ENCODE measurements at regions of chr1 and their contacts with region 1.

Region 1: DNA sequence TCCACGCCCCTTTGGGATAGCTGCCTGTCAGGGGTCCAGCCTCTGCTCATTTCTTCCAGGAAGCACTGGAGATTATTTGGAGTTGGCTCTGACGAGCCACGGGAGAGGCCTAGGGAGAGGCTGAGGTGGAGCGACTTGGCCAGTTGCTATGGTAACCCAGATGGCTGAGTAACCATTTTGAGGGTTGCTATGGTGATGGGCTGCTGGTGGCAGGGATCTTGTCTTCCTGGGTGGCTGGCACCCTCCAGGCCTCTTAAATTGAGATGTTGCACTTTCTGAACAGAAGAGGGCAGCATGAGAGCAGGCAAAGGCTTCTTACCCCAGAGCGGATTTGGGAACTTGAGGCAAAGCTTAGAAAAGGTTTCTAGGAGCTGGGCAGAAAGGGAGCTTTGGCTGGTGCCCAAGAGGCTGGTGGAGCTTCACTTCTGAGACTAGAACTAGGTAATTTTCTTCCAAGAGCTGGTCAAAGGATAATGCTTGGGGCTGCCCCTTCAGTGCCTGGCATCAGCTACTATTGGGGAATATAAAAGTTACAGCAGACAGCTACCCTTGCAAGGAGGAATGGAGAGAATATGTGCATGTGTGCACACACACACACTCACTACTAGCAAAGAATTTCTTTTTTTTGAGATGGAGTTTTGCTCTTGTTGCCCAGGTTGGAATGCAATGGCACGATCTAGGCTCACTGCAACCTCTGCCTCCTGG is 72.5 kb downstream of the NDUFS5 start:
- DNase-seq: peak; percentile 94
- H3K27ac ChIP-seq: no peak overlapping the region
- CTCF ChIP-seq: peak; percentile 80

Region 2: GRCh38 chr1:39061951-39062350 is 36.7 kb before region 1 on chr1:
- CTCF ChIA-PET with region 1: no interaction called
- POLR2A ChIA-PET with region 1: no interaction called
- DNase-seq: no peak
- H3K27ac ChIP-seq: no peak overlapping the region
- CTCF ChIP-seq: no peak

Region 3: DNA sequence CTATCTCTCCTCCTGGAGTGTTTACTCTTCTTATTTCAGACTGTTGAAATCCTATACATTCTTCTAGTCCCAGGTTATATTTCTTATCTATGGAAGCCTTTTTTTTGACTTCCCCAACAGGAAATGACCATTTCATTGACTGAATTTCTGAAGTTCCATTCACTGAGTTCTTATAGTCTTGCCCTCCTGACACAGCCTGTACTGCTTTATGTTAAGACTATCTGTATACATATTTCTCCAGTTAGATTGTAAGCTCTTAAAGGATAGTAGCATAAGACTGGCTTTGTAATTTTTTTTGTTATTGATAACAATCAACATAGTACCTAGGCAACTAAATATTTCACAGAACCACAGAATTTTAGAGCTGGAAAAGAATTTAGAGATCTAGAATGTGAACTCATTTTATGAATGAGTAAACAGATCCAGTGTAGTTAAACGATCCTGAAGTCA is 90.9 kb after region 1 on chr1:
- CTCF ChIA-PET with region 1: interaction called, 22 read pairs
- POLR2A ChIA-PET with region 1: no interaction called
- DNase-seq: no peak
- H3K27ac ChIP-seq: no peak overlapping the region
- CTCF ChIP-seq: no peak

Region 4: DNA sequence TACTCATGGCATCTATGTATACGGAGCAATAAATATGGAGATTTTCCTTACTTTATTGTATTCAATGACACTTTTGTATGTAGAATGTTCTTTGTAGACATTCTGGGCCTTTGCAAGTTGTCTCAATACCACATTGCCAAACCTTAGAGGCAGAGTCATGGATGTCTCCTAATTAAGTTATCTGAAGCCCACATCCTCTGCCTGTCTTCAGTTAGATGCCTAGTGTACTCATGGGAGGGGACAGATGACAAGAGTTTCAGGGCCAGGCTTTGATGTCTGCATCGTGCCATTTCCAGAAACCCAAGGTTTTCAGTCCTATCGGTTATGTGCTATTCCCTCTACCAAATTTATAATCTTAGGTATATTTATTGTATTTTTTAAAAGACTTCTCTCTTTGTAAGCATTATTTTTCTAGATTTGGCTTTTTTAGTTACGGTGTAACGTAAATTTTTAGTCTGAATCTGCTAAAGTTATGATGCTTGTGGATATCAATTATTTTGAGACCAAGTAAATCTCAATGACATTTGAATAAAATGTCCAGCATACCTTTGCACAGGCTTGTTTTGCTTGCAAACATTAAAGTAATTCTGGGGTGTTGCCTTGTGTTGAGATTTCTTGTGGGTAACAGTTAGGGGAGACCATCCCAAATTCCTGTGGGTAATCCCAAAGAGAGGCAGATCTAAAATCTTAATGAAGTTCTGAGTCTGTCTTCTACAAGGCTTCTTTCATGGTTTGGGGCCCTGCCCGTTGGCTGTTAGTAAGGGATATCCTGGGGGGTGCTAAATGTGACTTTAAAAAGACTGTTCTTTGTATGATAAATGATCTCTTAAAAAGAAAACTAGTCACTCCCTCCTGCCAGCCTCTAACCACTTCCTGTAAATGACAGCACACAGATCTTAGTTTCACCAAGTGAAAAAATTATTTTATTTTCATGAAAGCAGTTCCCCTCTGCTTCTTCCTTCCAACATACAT is 97.8 kb after region 1 on chr1:
- CTCF ChIA-PET with region 1: interaction called, 22 read pairs
- POLR2A ChIA-PET with region 1: no interaction called
- DNase-seq: no peak
- H3K27ac ChIP-seq: no peak overlapping the region
- CTCF ChIP-seq: no peak

Region 5: DNA sequence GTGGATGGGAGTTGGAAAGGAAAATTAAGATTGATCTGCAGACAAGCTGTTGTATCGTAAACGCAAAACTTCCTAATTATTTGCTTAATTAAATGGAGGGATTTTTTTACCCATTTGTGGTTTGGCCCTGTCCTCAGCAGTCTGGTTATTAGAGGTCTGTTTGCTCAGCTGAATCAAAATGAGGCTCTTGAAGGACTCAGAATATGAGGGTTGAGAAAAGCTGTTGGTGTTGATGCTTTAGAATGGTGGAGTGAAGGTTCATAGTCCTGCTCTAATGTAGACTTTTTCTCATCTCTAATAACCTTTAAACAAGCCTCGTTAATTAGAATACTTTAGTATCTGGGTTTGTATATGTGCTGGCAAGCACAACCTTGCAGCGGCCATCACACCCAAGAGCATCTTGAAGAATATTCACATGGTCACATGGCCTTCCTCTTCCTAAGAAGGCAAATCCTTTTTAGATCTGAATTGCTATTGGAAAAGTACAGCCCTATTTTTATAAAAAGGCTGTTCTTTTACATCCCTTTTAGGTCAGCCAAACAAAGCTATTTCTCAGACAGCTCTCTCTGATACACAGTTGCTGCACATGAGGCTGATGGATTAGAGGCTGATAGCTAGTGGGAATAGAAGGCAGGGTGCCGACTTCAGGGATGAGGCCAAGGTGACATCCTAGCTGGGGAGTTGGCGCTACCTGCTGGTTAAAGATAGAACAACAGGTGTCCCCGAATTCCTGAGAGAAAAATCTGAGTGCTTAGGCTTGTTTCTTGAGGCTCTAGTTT is 159.6 kb after region 1 on chr1:
- CTCF ChIA-PET with region 1: interaction called, 15 read pairs
- POLR2A ChIA-PET with region 1: no interaction called
- DNase-seq: peak; percentile 86
- H3K27ac ChIP-seq: no peak overlapping the region
- CTCF ChIP-seq: peak; percentile 89

Region 6: DNA sequence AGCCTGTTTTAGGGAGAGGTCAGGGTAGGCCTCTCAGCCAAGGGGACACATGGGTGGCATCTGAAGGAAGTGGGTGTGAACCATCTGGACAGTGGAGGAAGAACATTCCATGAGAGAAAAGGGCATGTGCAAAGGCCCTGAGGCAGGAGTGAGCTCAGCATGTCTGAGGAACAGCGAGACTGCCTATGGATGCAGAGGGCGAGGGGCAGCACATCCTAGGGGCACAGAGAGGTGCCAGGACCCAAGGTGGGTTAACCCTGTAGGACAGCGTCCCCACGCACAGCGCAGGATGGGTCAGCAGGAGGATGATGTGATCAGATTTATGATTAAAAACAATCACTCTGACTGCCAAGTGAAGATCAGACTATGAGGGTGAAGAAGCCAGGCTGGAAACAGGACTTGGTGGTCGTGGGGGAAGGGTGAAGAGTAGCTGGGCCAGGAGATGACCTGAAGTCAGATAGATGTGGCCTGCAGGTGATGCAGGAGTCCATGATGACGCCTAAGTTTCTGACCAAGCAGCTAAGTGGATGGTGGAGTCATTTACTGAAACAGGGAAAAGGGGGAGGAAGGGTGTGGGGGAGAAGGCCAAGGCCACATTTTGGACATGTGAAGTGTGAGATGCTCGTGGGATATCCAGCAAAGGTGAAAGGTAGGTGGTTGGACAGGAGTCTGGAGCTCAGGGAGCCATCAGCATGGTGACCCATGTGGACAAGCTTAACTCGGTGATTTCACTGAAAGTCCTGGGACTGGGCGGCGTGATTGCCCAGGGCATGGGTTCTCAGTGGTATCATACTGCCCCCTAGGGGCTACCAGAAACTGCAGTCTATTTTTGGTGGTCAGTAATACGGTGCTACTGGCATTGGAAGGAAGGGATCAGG is 440.1 kb after region 1 on chr1:
- CTCF ChIA-PET with region 1: interaction called, 10 read pairs
- POLR2A ChIA-PET with region 1: no interaction called
- DNase-seq: peak; percentile 67
- H3K27ac ChIP-seq: no peak overlapping the region
- CTCF ChIP-seq: peak; percentile 77